Activated B cell treated with CpG ODN at 0.5 μM for 24 hours (primary cell): ENCODE measurements at regions of chr3 and their contacts with region 1.

Region 1: GRCh38 chr3:155744626-155745324 is at the start of gene PLCH1:
- DNase-seq: peak; percentile 20
- ATAC-seq: peak; percentile 81
- H3K4me3 Mint-ChIP-seq: peak within 1 kb of the TSS; percentile 87
- H3K27ac Mint-ChIP-seq: peak within 1 kb of the TSS; percentile 66
- H3K4me1 Mint-ChIP-seq: peaks cover 25% of the 10 kb centered on the region
- H3K27me3 Mint-ChIP-seq: peaks cover 20% of the 10 kb centered on the region
- CTCF ChIP-seq: no peak
- total RNA-seq, gene PLCH1: 0.12 and 0.27 TPM in 2 replicates

Region 2: DNA sequence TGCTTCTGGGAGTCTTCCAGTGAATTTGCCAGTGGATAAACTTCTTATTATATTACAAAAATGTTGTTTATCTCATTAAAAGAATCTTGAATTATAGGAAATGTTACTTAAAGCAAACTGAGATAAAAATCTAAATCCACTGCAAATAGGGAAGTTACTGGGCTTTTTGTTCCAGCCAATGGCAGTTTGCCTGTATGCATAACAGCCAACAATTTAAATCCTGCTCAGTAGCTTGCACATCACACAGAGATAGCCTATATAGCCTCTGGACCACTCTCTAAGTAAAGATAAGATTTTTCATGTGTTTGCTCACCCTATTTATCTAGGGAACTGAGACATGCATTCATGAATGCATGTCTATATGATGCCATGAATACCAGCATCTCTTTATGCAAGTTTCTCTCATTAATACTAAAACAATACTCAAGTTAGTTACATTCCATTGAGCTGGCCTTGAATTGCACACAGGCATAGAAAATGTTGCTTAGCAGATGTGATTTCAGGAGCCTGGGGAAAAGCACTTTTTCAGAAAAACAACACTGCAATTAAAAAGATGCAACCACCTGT is 1222.7 kb before region 1 on chr3:
- CTCF ChIA-PET with region 1: no interaction called
- POLR2A ChIA-PET with region 1: no interaction called
- intact Hi-C with region 1: no loop called
- DNase-seq: no peak
- ATAC-seq: no peak
- H3K4me3 Mint-ChIP-seq: no peak overlapping the region
- H3K27ac Mint-ChIP-seq: no peak overlapping the region
- H3K4me1 Mint-ChIP-seq: no peaks in the 10 kb centered on the region
- H3K27me3 Mint-ChIP-seq: no peaks in the 10 kb centered on the region
- CTCF ChIP-seq: no peak

Region 3: GRCh38 chr3:155778462-155778861 is 33.7 kb after region 1 on chr3:
- CTCF ChIA-PET with region 1: no interaction called
- POLR2A ChIA-PET with region 1: no interaction called
- intact Hi-C with region 1: no loop called
- DNase-seq: no peak
- ATAC-seq: no peak
- H3K4me3 Mint-ChIP-seq: no peak overlapping the region
- H3K27ac Mint-ChIP-seq: no peak overlapping the region
- H3K4me1 Mint-ChIP-seq: no peaks in the 10 kb centered on the region
- H3K27me3 Mint-ChIP-seq: no peaks in the 10 kb centered on the region
- CTCF ChIP-seq: no peak

Region 4: DNA sequence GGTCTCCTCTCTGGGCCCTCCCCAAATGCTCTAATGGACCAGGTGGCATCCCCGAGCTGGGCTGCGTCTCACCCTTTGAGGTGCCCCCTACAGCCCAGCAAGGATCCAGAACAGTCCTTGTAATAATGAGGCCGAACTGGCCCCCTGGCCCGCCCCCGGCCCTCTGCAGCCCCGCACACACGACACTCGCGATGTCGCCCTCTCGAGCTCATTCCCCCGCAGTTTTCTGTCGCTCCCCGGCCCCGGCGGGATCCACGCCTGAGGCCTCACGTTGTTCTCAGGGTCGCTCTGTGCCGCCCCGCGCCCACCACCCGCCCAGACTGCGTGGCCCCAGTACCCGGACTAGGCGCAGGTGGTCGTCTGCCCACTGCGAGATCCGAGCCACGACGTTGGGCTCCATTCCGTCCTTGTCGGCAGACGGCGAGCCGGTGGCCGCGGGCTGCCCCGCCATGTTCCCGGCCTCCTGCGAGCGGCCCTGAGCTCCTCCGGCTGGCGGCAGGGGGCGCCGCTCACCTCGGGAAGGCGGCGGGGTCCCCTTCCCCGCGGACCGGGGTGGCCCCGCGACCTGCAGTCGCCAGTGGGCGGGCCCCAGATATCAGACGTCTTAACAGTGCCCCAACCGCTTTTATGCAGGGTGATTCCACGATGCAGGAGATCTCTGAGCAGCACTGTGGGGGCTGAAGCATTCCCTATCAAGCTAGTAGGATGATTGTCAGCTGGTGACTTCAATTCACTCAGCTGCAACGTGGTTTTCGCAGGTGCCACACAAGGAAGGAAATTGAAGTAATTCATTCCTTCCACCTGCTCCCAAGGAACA is 61.2 kb after region 1 on chr3 and contains the start of gene C3orf33:
- CTCF ChIA-PET with region 1: interaction called, 9 read pairs
- POLR2A ChIA-PET with region 1: no interaction called
- intact Hi-C with region 1: loop called (anchors 5 kb)
- DNase-seq: peak; percentile 75
- ATAC-seq: peak; percentile 93
- H3K4me3 Mint-ChIP-seq: peak within 1 kb of the TSS; percentile 90
- H3K27ac Mint-ChIP-seq: peak within 1 kb of the TSS; percentile 80
- H3K4me1 Mint-ChIP-seq: peaks cover 3% of the 10 kb centered on the region
- H3K27me3 Mint-ChIP-seq: peaks cover 6% of the 10 kb centered on the region
- CTCF ChIP-seq: peak; percentile 82
- total RNA-seq, gene C3orf33: 1.6 and 2.4 TPM in 2 replicates